ENCODE measurements at regions of chr6 and their contacts with region 1.

Region 1: DNA sequence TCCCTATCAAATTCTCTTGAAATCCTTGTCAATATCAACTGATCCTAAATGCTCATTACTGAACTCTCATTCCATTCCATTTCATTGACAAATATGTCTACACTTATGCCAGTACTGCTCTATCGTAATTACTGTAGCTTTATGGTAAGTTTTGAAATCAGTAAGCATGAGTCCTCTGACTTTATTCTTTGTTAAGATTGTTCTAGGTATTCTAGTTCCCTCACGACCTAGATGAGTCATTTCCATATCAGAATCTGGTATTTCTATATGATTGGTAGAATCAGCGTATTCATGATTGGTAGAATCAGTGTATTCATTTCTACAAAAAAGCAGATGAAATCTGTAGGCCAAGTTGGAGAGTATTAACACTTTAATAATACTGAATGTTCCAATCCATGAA is 318.6 kb upstream of the RUNX2 start:
- DNase-seq: no peak
- H3K4me3 Mint-ChIP-seq: no peak overlapping the region
- H3K27ac Mint-ChIP-seq: peak overlapping the region; percentile 67
- H3K4me1 Mint-ChIP-seq: peaks cover 30% of the 10 kb centered on the region
- H3K27me3 Mint-ChIP-seq: no peaks in the 10 kb centered on the region

Region 2: GRCh38 chr6:44397424-44398164 is 612.0 kb before region 1 on chr6:
- intact Hi-C with region 1: no loop called
- DNase-seq: no peak
- H3K4me3 Mint-ChIP-seq: no peak overlapping the region
- H3K27ac Mint-ChIP-seq: no peak overlapping the region
- H3K4me1 Mint-ChIP-seq: peaks cover 32% of the 10 kb centered on the region
- H3K27me3 Mint-ChIP-seq: no peaks in the 10 kb centered on the region

Region 3: DNA sequence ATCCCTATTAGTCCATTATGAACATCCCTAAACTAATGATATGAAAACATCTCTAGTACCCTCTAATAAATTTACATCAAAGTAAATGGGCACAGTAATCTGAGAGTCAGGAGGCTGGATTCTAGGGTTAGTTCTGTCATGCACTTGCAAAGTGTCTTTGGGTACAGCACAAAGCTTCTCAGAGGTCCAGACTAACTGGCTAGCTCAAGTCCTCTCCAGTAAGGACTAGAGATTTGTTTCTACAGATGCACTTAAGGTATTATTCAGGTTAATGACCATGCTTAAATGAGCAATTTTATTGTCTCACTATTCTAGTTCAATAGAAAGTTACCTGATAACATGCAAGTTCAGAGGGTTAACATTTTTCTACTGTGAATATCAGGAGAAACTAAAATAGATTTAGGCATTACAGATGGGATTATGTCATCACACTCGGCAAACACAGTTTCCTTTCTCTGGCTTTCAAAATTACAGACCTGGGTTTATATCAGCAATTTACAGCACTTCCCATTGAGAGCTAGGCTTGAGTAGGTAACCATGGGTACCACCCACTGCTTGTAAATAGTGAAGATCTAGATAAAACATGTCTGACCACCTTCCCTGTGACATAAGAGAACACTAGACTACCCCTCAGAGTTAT is 84.4 kb before region 1 on chr6:
- intact Hi-C with region 1: loop called (anchors 1 kb)
- DNase-seq: peak; percentile 18
- H3K4me3 Mint-ChIP-seq: peak overlapping the region; percentile 16
- H3K27ac Mint-ChIP-seq: peak overlapping the region; percentile 67
- H3K4me1 Mint-ChIP-seq: peaks cover 47% of the 10 kb centered on the region
- H3K27me3 Mint-ChIP-seq: no peaks in the 10 kb centered on the region

Region 4: DNA sequence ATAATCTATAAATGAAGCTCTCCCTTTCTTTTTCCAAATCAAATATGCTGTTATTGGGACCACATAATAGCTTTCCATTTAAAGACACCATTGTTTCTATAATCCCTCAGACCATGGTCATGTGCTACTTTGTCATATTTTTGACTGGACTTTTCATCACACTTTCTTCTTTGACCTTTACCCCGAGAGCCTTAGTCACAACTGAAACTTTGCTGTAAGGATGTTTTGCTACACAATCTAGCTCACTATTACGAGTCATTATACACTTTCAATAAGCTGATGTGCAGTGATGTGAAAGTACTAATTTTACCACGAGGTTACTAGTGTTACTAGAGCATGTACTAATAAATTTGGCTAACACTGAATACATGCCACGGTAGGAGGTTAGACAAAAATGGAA is 48.7 kb before region 1 on chr6:
- intact Hi-C with region 1: loop called (anchors 1 kb)
- DNase-seq: no peak
- H3K4me3 Mint-ChIP-seq: no peak overlapping the region
- H3K27ac Mint-ChIP-seq: no peak overlapping the region
- H3K4me1 Mint-ChIP-seq: peaks cover 10% of the 10 kb centered on the region
- H3K27me3 Mint-ChIP-seq: no peaks in the 10 kb centered on the region

Region 5: DNA sequence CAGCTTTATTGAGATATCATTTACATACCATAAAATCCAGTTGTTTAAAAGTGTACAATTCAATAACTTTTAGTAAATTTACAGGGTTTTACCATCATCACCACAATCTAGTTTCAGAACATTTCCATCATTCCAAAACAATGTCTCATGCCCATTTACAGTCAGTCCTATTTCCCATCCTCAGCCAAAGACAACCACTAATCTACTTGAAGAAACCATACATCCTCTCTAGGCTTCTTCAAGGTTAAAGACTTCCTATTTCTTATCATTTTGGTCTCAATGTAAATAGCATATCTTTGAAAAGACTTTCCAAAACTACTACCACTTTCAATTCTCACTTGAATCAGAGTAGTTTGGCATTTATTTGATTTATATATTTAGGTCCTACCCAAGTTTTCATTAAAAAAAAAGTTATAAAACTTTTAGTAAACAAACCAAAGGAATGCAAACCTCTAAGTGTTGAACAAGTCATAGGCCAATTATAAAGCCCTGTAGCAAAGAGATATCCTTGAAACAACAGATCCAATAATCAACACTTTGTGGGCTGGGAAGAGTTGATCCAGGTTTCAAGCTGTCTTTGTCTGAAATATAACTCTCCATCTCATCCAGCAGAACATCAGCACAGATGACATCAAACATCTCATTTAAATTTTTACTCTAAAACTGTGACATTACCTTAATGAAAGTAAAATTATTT is 107.3 kb after region 1 on chr6:
- intact Hi-C with region 1: loop called (anchors 1 kb)
- DNase-seq: no peak
- H3K4me3 Mint-ChIP-seq: no peak overlapping the region
- H3K27ac Mint-ChIP-seq: peak overlapping the region; percentile 47
- H3K4me1 Mint-ChIP-seq: peaks cover 24% of the 10 kb centered on the region
- H3K27me3 Mint-ChIP-seq: no peaks in the 10 kb centered on the region

Region 6: GRCh38 chr6:45436544-45437438 is 427.2 kb after region 1 on chr6:
- intact Hi-C with region 1: loop called (anchors 5 kb)
- DNase-seq: no peak
- H3K4me3 Mint-ChIP-seq: peak overlapping the region; percentile 70
- H3K27ac Mint-ChIP-seq: peak overlapping the region; percentile 86
- H3K4me1 Mint-ChIP-seq: peaks cover 59% of the 10 kb centered on the region
- H3K27me3 Mint-ChIP-seq: no peaks in the 10 kb centered on the region